ENCODE measurements at regions of chr17 and their contacts with region 1.

Region 1: GRCh38 chr17:39401412-39402243 is at the start of gene FBXL20:
- DNase-seq: peak; percentile 95
- H3K4me3 Mint-ChIP-seq: peak within 1 kb of the TSS; percentile 98
- H3K27ac Mint-ChIP-seq: peak within 1 kb of the TSS; percentile 96
- H3K4me1 Mint-ChIP-seq: peaks cover 53% of the 10 kb centered on the region
- H3K27me3 Mint-ChIP-seq: no peaks in the 10 kb centered on the region
- total RNA-seq, gene FBXL20: 17.4 to 18.3 TPM

Region 2: GRCh38 chr17:39199820-39200069 is 201.9 kb before region 1 on chr17:
- CTCF ChIA-PET with region 1: no interaction called
- POLR2A ChIA-PET with region 1: interaction called, 4 read pairs
- intact Hi-C with region 1: loop called (anchors 1 kb)
- DNase-seq: peak; percentile 93
- H3K4me3 Mint-ChIP-seq: peak overlapping the region; percentile 95
- H3K27ac Mint-ChIP-seq: peak overlapping the region; percentile 97
- H3K4me1 Mint-ChIP-seq: peaks cover 59% of the 10 kb centered on the region
- H3K27me3 Mint-ChIP-seq: no peaks in the 10 kb centered on the region

Region 3: GRCh38 chr17:39270923-39271322 is 130.7 kb before region 1 on chr17:
- CTCF ChIA-PET with region 1: no interaction called
- POLR2A ChIA-PET with region 1: no interaction called
- intact Hi-C with region 1: loop called (anchors 10 kb)
- DNase-seq: peak; percentile 20
- H3K4me3 Mint-ChIP-seq: no peak overlapping the region
- H3K27ac Mint-ChIP-seq: no peak overlapping the region
- H3K4me1 Mint-ChIP-seq: no peaks in the 10 kb centered on the region
- H3K27me3 Mint-ChIP-seq: no peaks in the 10 kb centered on the region

Region 4: DNA sequence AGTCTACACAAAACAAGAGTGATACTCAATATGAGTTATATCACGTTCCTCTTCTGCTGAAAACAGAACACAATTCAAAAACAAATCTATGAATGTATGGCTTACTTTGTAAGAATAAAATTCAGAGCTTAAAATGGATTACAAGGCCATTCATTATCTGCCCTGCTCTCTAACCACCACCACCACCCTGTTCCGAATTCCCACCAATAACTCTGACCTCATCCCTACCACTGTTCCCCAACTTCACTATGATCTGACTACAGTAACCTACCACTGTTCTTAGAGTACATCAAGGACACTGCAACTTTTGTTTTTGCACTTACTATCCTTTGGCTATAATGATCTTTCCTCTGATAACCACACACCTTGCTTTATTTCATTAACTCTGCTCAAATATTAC is 21.5 kb before region 1 on chr17:
- CTCF ChIA-PET with region 1: interaction called, 4 read pairs
- POLR2A ChIA-PET with region 1: no interaction called
- intact Hi-C with region 1: loop called (anchors 1 kb)
- DNase-seq: peak; percentile 41
- H3K4me3 Mint-ChIP-seq: no peak overlapping the region
- H3K27ac Mint-ChIP-seq: no peak overlapping the region
- H3K4me1 Mint-ChIP-seq: peaks cover 31% of the 10 kb centered on the region
- H3K27me3 Mint-ChIP-seq: no peaks in the 10 kb centered on the region

Region 5: DNA sequence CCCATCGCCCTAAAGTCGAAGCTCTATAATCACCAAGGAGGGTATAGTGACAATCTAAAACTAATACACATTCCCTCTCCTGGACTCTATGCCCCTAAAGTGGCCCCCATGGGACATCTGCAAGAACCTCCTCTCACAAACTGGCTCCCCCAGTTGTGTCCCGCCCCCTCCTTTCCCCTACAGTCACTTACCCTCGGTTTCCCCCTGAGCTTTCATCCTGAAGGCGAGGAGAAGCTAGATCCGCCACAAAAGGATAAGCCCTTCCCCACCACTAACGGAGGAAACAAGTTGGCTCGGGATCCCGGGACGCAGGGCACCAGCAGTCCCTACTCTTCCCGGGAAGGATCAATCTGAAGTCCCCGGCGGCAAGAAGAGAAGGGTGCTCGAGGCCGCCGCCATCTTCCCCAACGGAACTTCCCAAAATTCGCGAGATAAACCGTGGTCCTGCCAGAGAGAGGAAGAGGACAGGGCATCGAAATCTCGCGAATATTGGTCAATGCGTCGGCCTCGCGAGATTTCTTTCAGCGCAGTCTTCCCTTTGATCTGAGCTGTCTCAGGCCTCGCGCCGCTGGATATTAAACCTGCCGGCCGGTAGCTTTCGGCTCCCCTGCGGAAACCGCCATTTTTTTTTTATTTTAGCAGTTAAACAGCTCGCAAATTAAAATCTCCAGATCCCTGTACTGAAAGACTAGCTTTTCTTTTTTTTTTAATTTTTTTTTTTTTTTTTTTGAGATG is 49.4 kb after region 1 on chr17 and contains the start of gene MED1:
- CTCF ChIA-PET with region 1: no interaction called
- POLR2A ChIA-PET with region 1: interaction called, 9 read pairs
- intact Hi-C with region 1: loop called (anchors 1 kb)
- DNase-seq: peak; percentile 96
- H3K4me3 Mint-ChIP-seq: peak within 1 kb of the TSS; percentile 96
- H3K27ac Mint-ChIP-seq: peak within 1 kb of the TSS; percentile 96
- H3K4me1 Mint-ChIP-seq: peaks cover 26% of the 10 kb centered on the region
- H3K27me3 Mint-ChIP-seq: no peaks in the 10 kb centered on the region
- total RNA-seq, gene MED1: 58.9 to 59.7 TPM

Region 6: GRCh38 chr17:39461113-39461925 is 59.7 kb after region 1 on chr17 and contains the start of gene CDK12:
- CTCF ChIA-PET with region 1: no interaction called
- POLR2A ChIA-PET with region 1: interaction called, 10 read pairs
- intact Hi-C with region 1: loop called (anchors 1 kb)
- DNase-seq: peak; percentile 98
- H3K4me3 Mint-ChIP-seq: peak within 1 kb of the TSS; percentile 88
- H3K27ac Mint-ChIP-seq: peak within 1 kb of the TSS; percentile 95
- H3K4me1 Mint-ChIP-seq: peaks cover 22% of the 10 kb centered on the region
- H3K27me3 Mint-ChIP-seq: no peaks in the 10 kb centered on the region
- total RNA-seq, gene CDK12: 55.8 to 57.4 TPM

Region 7: DNA sequence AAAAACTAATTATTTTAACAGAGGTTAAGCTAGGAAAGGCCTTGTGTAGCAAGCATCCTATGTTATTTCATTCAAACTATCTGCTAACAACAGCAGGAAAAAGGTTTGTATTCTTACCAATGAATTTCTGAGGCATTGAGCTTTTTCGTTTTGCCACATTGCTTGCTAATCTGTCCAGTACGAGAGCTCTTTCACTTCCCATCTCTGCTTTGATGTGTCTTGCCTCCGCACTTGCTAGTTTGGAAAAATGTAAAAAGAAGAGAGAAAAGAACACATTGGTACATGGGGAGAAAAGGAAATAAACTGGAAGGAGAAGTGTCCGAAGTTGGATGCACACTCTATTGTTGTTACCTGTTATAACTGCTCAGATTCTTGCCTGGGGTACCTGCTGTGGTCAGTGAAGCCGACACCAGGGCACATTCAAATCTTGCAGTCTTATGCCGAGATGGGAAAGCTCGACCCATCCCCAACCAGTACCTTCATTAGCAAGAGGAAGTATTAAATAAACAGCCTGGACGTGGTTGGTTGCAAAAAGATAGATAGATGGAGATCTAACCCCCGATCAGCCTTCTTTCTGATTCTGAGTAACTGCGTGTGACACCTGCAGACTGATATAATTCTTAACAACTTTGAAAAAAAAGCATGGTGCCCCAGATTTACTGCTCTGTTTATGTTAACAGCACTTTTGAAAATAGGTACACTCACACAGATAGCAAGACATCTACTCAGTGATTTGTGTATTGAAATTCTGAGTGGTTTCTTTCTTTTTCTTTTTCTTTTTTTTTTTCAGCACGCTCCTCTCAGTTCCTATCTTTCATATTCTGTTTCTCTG is 376.1 kb after region 1 on chr17:
- CTCF ChIA-PET with region 1: no interaction called
- POLR2A ChIA-PET with region 1: no interaction called
- intact Hi-C with region 1: loop called (anchors 5 kb)
- DNase-seq: no peak
- H3K4me3 Mint-ChIP-seq: peak overlapping the region; percentile 80
- H3K27ac Mint-ChIP-seq: peak overlapping the region; percentile 88
- H3K4me1 Mint-ChIP-seq: peaks cover 84% of the 10 kb centered on the region
- H3K27me3 Mint-ChIP-seq: no peaks in the 10 kb centered on the region

Measured in activated CD4-positive, alpha-beta memory T cell treated with anti-CD3 and anti-CD28 coated beads for 36 hours (primary cell).